ENCODE measurements at regions of chr22 and their contacts with region 1.

Region 1: DNA sequence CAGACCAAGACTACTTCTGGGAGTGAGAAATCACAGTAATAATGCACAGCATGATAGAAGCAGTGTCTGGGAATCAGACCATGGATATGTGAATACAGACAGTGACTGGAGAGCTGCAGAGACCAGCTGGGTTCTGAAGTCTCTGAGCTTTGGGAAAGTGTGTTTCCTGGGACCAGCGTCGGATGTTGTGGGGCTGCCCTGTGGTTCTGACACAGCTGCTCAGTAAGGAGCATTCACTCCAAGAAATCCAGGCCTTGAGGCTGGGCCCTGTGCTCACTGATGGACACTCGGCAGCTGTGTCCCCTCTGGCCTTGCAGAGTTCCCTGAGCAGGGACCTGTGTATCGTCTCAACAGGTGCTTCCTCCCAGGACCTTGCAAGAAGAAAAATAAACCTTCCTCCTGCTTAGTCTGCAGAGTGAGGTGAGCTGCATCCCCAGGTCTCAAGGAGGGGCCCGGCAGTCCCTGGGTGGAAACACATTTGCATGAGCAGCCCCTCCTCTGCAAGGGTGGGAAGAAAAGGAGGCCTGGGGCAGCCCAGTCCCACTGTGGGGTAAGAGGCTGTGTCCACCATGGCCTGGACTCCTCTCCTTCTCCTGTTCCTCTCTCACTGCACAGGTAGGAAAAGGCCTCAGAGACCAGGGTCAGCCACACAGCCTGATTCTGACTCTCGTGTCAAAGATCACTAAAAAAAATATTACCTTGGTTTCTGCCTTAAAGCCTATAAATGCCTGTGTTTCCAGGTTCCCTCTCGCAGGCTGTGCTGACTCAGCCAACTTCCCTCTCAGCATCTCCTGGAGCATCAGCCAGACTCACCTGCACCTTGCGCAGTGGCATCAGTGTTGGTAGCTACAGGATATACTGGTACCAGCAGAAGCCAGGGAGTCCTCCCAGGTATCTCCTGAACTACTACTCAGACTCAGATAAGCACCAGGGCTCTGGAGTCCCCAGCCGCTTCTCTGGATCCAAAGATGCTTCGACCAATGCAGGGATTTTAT is 108.1 kb downstream of the VPREB1 start:
- DNase-seq: no peak
- H3K4me3 ChIP-seq: no peak overlapping the region
- H3K27ac ChIP-seq: no peak overlapping the region
- H3K4me1 ChIP-seq: no peaks in the 10 kb centered on the region
- H3K27me3 ChIP-seq: no peaks in the 10 kb centered on the region
- CTCF ChIP-seq: no peak
- EP300 ChIP-seq: no peak
- POLR2A ChIP-seq: no peak

Region 2: GRCh38 chr22:22375576-22376423 is 23.1 kb after region 1 on chr22:
- intact Hi-C with region 1: loop called in 2 of 4 experiments (anchors 1 to 2 kb)
- DNase-seq: no peak
- H3K4me3 ChIP-seq: no peak overlapping the region
- H3K27ac ChIP-seq: no peak overlapping the region
- H3K4me1 ChIP-seq: peaks cover 3% of the 10 kb centered on the region
- H3K27me3 ChIP-seq: no peaks in the 10 kb centered on the region
- CTCF ChIP-seq: no peak
- EP300 ChIP-seq: no peak
- POLR2A ChIP-seq: no peak

Region 3: GRCh38 chr22:22397277-22397870 is 44.7 kb after region 1 on chr22:
- intact Hi-C with region 1: loop called in 1 of 4 experiments (anchors 1 kb)
- DNase-seq: peak in 1 of 5 donors; percentile 34
- H3K4me3 ChIP-seq: no peak overlapping the region
- H3K27ac ChIP-seq: no peak overlapping the region
- H3K4me1 ChIP-seq: no peaks in the 10 kb centered on the region
- H3K27me3 ChIP-seq: no peaks in the 10 kb centered on the region
- CTCF ChIP-seq: no peak
- EP300 ChIP-seq: no peak
- POLR2A ChIP-seq: no peak